IMR-90 (cell line): ENCODE measurements at regions of chr13 and their contacts with region 1.

Region 1: GRCh38 chr13:107342747-107343146 is 774.8 kb upstream of the ARGLU1 start:
- DNase-seq: no peak
- ATAC-seq: no peak
- H3K4me3 ChIP-seq: no peak overlapping the region
- H3K27ac ChIP-seq: no peak overlapping the region
- H3K4me1 ChIP-seq: peaks cover 4% of the 10 kb centered on the region
- H3K27me3 ChIP-seq: no peaks in the 10 kb centered on the region
- CTCF ChIP-seq: no peak
- POLR2A ChIP-seq: no peak
- RAD21 ChIP-seq: no peak

Region 2: DNA sequence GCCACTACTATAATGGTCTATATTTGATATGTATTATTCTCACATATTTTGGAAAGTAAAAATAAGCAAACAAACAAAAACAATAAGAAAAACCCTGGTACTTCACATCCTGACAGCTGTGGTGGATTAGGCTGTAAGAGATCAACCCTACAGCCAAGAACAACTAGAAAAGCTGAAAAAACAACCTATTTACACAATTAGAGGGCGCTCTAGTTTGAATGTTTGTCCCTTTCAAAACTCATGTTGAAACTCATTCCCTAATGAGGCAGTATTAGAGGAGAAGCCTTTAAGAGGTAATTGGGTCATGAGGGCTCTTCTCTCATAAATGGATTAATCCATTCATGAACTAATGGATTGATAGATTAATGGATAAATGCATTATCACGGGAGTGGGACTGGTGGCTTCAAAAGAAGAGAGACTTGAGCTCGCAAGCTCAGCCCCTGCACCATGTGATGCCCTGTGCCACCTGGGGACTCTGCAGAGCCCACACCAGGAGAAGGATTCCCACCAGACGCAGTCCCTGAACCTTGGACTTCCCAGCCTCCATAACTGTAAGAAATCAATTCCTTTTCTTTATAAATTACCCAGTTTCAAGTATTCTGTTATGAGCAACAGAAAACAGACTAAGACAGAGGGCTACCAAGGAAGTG is 40.9 kb before region 1 on chr13:
- CTCF ChIA-PET with region 1: no interaction called
- POLR2A ChIA-PET with region 1: no interaction called
- dilution Hi-C with region 1: no loop called
- in situ Hi-C with region 1: no loop called
- intact Hi-C with region 1: loop called (anchors 5 kb)
- DNase-seq: no peak
- ATAC-seq: no peak
- H3K4me3 ChIP-seq: no peak overlapping the region
- H3K27ac ChIP-seq: no peak overlapping the region
- H3K4me1 ChIP-seq: no peaks in the 10 kb centered on the region
- H3K27me3 ChIP-seq: no peaks in the 10 kb centered on the region
- CTCF ChIP-seq: no peak
- POLR2A ChIP-seq: no peak
- RAD21 ChIP-seq: no peak

Region 3: DNA sequence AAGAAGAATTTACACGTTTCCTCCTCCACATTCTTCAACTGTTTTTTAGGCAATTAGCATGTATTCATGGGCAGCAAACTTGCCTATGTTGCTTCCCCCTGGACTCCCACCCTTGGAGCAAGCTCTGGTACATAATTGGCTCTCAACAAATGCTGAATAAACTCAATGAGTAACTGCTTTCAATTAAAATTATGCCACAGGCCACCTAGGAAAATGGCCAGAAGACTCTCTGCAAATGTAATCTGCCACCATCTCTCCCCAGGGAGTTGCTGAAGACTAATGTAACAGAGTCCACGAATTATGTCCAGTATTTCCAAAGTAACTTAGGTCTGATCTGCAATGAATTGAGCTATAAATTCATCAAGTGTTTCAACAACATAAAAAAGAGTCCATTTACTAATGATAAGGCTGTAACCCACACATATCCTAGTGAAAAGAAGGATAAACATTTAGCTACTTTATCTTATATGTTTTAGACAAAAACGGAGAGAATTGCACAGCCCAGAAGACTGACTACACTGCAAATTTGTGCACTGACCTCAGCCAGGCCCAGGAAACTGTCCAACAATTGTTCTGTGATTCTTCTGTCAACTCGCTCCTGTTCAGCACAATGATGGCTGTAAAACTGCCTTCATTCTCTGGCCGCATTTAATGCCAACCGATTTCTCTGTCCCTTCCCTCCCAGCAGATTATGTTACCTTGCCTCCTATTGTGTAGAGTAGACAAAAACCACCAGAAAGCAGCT is 33.8 kb after region 1 on chr13:
- CTCF ChIA-PET with region 1: no interaction called
- POLR2A ChIA-PET with region 1: no interaction called
- dilution Hi-C with region 1: no loop called
- in situ Hi-C with region 1: no loop called
- intact Hi-C with region 1: no loop called
- DNase-seq: peak; percentile 18
- ATAC-seq: no peak
- H3K4me3 ChIP-seq: no peak overlapping the region
- H3K27ac ChIP-seq: no peak overlapping the region
- H3K4me1 ChIP-seq: peaks cover 13% of the 10 kb centered on the region
- H3K27me3 ChIP-seq: no peaks in the 10 kb centered on the region
- CTCF ChIP-seq: no peak
- POLR2A ChIP-seq: no peak
- RAD21 ChIP-seq: no peak